ENCODE measurements at regions of chr3 and their contacts with region 1.

Region 1: DNA sequence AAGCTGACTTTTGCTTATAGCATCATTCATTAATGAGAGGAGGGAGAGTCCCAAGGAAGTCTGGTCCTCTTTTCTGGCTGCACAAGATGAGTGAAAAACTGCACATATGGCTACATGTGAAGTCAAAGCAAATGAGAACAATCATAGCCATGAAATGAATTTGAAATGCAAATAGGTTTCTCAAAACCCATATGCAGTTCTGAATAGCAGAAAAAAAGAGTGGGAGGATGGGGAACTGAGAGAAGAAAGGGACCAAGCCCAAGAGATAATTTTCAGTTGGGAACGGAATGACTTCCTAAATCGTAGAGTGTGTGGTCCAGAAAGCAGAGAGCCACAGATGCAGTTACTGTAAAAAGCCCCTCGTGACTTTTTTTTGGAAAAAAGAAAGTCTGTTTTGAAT is 66.3 kb downstream of the GTPBP8 start:
- DNase-seq: peak; percentile 39
- CTCF ChIP-seq: no peak

Region 2: DNA sequence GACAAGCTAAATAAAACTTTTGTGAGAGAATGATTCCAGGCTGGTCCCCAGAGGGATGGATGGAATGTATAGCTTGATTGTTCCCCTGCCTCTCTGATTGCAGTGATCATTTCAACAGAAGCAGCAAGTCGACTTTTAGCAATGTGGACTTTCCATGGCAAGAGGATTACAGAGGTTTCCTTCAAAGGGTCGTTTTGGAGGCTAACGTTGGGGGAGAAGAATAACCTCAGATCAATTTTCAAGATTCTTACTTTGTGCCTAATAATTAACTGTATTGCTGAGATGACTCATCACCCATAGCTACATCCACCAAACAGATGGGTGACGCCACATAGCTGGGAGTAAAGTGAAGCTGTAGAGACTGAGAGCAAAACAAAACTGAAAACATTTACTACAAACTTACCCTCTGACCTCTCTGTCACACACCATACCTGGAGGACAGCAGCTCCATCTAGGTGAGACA is 13.6 kb after region 1 on chr3:
- CTCF ChIA-PET with region 1: interaction called, 14 read pairs
- POLR2A ChIA-PET with region 1: interaction called, 4 read pairs
- DNase-seq: peak; percentile 42
- CTCF ChIP-seq: no peak

Region 3: GRCh38 chr3:113166719-113167492 is 109.8 kb after region 1 on chr3:
- CTCF ChIA-PET with region 1: no interaction called
- POLR2A ChIA-PET with region 1: no interaction called
- DNase-seq: no peak
- CTCF ChIP-seq: no peak